Activated T-helper 2 cell treated with anti-CD3 and anti-CD28 coated beads, Interferon-gamma antibody, Interleukin-2, Interleukin-4, amounts not matched to agents 10 μg/mL and 5 μg/mL and 100 μg/mL, durations not matched to agents 14 hours and 24 hours and 36 hours (primary cell): ENCODE measurements at regions of chr2 and their contacts with region 1.

Region 1: DNA sequence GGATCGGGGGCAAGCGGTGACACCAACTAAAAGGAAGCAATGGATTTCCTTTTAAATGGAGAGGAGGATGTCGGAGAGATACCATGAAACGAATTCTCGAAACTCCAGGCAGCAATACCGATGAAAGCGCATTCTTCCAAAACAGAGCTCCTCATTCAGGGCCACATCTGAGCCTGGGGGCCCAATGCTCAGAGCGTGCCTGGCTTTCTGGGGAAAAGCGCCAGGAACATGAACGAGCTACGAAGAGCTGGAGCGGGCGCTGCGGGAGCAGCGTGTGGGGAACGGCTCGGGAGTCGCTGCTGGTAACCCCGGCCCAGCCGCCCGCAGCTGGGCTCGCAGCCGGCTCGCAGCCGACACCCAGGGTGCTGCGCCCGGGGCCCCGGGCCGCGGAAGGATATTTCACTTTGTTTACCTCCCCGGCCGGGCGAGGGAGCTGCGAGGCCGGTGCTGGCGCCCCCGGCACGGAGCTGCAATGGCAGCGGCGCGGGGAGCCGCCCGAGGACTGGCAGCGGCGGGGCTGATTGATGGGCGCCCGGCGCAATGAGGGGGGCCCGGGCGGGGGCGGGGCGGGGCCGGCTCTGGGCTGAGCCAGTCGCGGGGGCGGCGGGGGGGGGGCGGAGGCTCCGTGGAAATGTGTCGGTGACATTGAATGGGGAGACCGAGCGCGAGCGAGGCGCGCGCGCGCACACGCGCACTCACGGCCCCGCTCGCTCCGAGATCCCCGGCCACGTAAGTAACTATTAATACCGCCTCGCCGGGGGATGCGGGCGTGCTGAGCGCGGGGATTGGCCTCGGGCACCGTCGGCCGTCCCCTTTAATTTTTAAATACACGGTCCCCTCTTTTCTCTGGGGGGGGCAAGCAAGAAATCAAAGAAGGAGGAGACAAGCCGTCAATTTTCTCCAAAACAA is at the start of gene TRIB2:
- DNase-seq: peak; percentile 83
- H3K4me3 Mint-ChIP-seq: peak within 1 kb of the TSS; percentile 97
- H3K27ac Mint-ChIP-seq: peak within 1 kb of the TSS; percentile 78
- H3K4me1 Mint-ChIP-seq: peaks cover 45% of the 10 kb centered on the region
- H3K27me3 Mint-ChIP-seq: peaks cover 17% of the 10 kb centered on the region
- total RNA-seq, gene TRIB2: 3.9 TPM in 2 replicates

Region 2: DNA sequence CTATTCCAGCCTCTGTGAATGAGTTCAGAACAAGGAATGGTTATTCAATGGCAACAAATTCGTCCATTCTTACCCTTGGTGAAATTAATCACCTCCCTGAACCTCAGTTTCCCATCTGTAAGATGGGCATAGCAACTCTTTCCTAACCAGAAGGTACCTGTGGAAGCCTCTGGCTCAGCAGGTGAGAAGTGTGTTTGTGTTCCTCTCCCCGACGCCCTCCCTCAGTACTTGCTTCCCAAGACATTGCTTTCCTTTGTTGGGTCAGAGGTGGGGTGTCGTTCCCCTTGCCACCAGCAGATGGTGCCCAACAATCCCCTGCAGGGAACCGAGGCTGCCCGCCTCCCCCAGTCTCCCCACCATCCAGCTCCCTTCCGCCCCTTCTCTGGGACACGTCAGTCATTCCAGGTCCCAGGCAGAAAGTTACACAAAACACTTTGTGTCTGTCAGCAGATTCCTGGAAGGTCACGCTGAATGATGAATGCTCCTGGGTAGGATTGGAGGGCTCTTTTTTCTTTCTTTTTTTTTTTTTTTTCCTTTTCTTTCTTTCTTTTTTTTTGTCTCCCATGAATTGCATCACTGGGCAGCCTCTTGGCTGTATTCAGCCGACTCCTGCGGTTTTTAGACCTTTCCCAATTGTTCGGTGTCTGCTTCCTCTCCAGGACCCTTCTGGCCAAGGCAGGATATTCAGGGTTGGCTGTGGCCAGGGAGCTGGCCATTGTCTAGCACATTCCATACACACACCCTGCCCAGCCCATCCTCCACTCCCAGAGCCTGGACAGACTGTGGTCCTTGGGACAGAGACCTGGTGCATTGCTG is 852.8 kb before region 1 on chr2:
- intact Hi-C with region 1: loop called (anchors 1 kb)
- DNase-seq: peak; percentile 47
- H3K4me3 Mint-ChIP-seq: no peak overlapping the region
- H3K27ac Mint-ChIP-seq: no peak overlapping the region
- H3K4me1 Mint-ChIP-seq: peaks cover 9% of the 10 kb centered on the region
- H3K27me3 Mint-ChIP-seq: peaks cover 13% of the 10 kb centered on the region

Region 3: DNA sequence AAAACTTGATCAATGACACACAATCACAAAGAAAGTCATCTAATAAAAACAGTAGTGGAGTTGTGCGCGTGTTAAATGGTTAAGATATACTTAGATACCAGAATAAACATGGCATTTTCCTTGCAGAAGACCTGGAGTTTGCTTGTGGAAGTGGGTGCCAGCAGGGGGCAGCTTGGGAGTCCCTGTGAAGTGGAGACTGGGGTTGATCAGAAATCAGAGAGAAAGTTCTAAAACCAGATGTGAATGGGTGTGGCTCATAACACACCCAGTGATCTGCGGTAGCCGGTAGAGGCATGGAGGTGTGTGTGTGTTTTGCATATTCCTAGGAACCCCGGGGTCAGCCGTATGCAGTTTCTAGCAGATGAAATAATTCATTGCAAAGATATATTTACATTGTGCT is 299.9 kb before region 1 on chr2:
- intact Hi-C with region 1: loop called (anchors 2 kb)
- DNase-seq: peak; percentile 54
- H3K4me3 Mint-ChIP-seq: no peak overlapping the region
- H3K27ac Mint-ChIP-seq: no peak overlapping the region
- H3K4me1 Mint-ChIP-seq: peaks cover 59% of the 10 kb centered on the region
- H3K27me3 Mint-ChIP-seq: no peaks in the 10 kb centered on the region

Region 4: GRCh38 chr2:12514631-12515433 is 201.7 kb before region 1 on chr2:
- intact Hi-C with region 1: no loop called
- DNase-seq: peak; percentile 60
- H3K4me3 Mint-ChIP-seq: peak overlapping the region; percentile 35
- H3K27ac Mint-ChIP-seq: peak overlapping the region; percentile 77
- H3K4me1 Mint-ChIP-seq: peaks cover 47% of the 10 kb centered on the region
- H3K27me3 Mint-ChIP-seq: no peaks in the 10 kb centered on the region

Region 5: GRCh38 chr2:12555012-12555645 is 161.4 kb before region 1 on chr2:
- intact Hi-C with region 1: loop called (anchors 1 kb)
- DNase-seq: no peak
- H3K4me3 Mint-ChIP-seq: peak overlapping the region; percentile 14
- H3K27ac Mint-ChIP-seq: peak overlapping the region; percentile 85
- H3K4me1 Mint-ChIP-seq: peaks cover 42% of the 10 kb centered on the region
- H3K27me3 Mint-ChIP-seq: no peaks in the 10 kb centered on the region

Region 6: GRCh38 chr2:12856934-12857601 is 140.5 kb after region 1 on chr2:
- intact Hi-C with region 1: loop called (anchors 2 kb)
- DNase-seq: peak; percentile 28
- H3K4me3 Mint-ChIP-seq: no peak overlapping the region
- H3K27ac Mint-ChIP-seq: no peak overlapping the region
- H3K4me1 Mint-ChIP-seq: peaks cover 20% of the 10 kb centered on the region
- H3K27me3 Mint-ChIP-seq: peaks cover 3% of the 10 kb centered on the region